Caco-2 (cell line): ENCODE measurements at regions of chr13 and their contacts with region 1.

Region 1: GRCh38 chr13:98484289-98485219 is 92.4 kb downstream of the STK24 start:
- DNase-seq: peak; percentile 88 to 89
- H3K4me3 ChIP-seq: peak overlapping the region; percentile 10; the same call in 1 of the 2 replicates
- H3K4me3 Mint-ChIP-seq: peak overlapping the region; percentile 66
- H3K27ac Mint-ChIP-seq: peak overlapping the region; percentile 94
- H3K4me1 ChIP-seq: peaks cover 35% of the 10 kb centered on the region
- H3K4me1 Mint-ChIP-seq: peaks cover 45% of the 10 kb centered on the region
- H3K27me3 ChIP-seq: no peaks in the 10 kb centered on the region
- H3K27me3 Mint-ChIP-seq: no peaks in the 10 kb centered on the region
- CTCF ChIP-seq: no peak

Region 2: GRCh38 chr13:98041081-98041820 is 443.3 kb before region 1 on chr13:
- CTCF ChIA-PET with region 1: no interaction called
- POLR2A ChIA-PET with region 1: no interaction called
- intact Hi-C with region 1: no loop called
- DNase-seq: no peak
- H3K4me3 ChIP-seq: no peak overlapping the region
- H3K4me3 Mint-ChIP-seq: no peak overlapping the region
- H3K27ac Mint-ChIP-seq: no peak overlapping the region
- H3K4me1 ChIP-seq: no peaks in the 10 kb centered on the region
- H3K4me1 Mint-ChIP-seq: no peaks in the 10 kb centered on the region
- H3K27me3 ChIP-seq: no peaks in the 10 kb centered on the region
- H3K27me3 Mint-ChIP-seq: no peaks in the 10 kb centered on the region
- CTCF ChIP-seq: no peak

Region 3: DNA sequence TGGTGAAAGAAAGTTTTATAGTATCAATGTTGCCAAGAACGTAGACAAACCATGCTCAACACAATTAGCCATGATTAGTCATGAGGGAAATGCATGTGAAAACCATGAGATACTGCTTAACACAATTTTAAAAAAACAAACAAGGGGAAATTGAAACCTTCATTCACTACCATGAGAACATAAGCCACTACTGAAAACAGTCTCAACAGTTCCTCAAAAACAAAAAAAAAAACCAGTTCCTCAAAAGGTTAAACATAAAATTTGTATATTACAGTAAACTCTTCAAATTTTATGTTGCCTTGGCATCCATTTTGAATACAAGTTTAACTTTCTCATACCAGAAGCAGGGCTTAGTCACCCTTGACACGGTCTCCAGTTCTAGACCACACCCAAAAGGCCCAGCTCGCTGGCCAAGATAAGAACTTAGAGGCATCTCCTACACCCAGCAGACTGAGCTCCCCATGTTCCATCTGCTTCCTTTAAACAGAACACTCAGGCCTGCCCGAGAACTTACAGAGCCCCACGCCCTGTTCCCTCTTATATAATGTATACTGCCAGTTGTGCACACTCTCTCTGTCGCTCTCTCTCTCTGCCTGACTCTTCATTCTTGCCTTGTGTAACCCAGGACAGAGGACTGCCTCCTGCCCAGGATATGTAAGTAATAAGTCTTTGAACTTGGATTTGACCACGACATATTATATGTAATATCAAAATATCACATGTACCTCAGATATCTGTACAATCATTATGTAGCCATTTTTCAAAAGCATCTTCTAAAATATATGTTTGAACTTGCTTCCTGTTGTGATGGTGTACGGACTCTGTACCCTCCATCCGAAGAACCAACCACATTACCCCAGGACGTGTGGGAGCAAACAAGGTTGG is 25.0 kb after region 1 on chr13:
- CTCF ChIA-PET with region 1: interaction called, 3 read pairs
- POLR2A ChIA-PET with region 1: interaction called, 10 read pairs
- intact Hi-C with region 1: no loop called
- DNase-seq: peak in 1 of 2 experiments; percentile 56
- H3K4me3 ChIP-seq: no peak overlapping the region
- H3K4me3 Mint-ChIP-seq: no peak overlapping the region
- H3K27ac Mint-ChIP-seq: peak overlapping the region; percentile 41
- H3K4me1 ChIP-seq: peaks cover 34% of the 10 kb centered on the region
- H3K4me1 Mint-ChIP-seq: peaks cover 53% of the 10 kb centered on the region
- H3K27me3 ChIP-seq: no peaks in the 10 kb centered on the region
- H3K27me3 Mint-ChIP-seq: no peaks in the 10 kb centered on the region
- CTCF ChIP-seq: no peak

Region 4: GRCh38 chr13:98542568-98543377 is 58.2 kb after region 1 on chr13:
- CTCF ChIA-PET with region 1: no interaction called
- POLR2A ChIA-PET with region 1: no interaction called
- intact Hi-C with region 1: loop called (anchors 5 kb)
- DNase-seq: no peak
- H3K4me3 ChIP-seq: no peak overlapping the region
- H3K4me3 Mint-ChIP-seq: no peak overlapping the region
- H3K27ac Mint-ChIP-seq: no peak overlapping the region
- H3K4me1 ChIP-seq: peaks cover 11% of the 10 kb centered on the region
- H3K4me1 Mint-ChIP-seq: peaks cover 34% of the 10 kb centered on the region
- H3K27me3 ChIP-seq: no peaks in the 10 kb centered on the region
- H3K27me3 Mint-ChIP-seq: no peaks in the 10 kb centered on the region
- CTCF ChIP-seq: no peak

Region 5: GRCh38 chr13:98556968-98557631 is 72.5 kb after region 1 on chr13:
- CTCF ChIA-PET with region 1: no interaction called
- POLR2A ChIA-PET with region 1: no interaction called
- intact Hi-C with region 1: loop called (anchors 5 kb)
- DNase-seq: peak in 1 of 2 experiments; percentile 39
- H3K4me3 ChIP-seq: no peak overlapping the region
- H3K4me3 Mint-ChIP-seq: no peak overlapping the region
- H3K27ac Mint-ChIP-seq: peak overlapping the region; percentile 31
- H3K4me1 ChIP-seq: 0 out of 2 replicates have a peak, but pooled peaks cover 3% of the 10 kb centered on the region
- H3K4me1 Mint-ChIP-seq: peaks cover 42% of the 10 kb centered on the region
- H3K27me3 ChIP-seq: no peaks in the 10 kb centered on the region
- H3K27me3 Mint-ChIP-seq: no peaks in the 10 kb centered on the region
- CTCF ChIP-seq: peak in 1 of 2 experiments; percentile 22

Region 6: DNA sequence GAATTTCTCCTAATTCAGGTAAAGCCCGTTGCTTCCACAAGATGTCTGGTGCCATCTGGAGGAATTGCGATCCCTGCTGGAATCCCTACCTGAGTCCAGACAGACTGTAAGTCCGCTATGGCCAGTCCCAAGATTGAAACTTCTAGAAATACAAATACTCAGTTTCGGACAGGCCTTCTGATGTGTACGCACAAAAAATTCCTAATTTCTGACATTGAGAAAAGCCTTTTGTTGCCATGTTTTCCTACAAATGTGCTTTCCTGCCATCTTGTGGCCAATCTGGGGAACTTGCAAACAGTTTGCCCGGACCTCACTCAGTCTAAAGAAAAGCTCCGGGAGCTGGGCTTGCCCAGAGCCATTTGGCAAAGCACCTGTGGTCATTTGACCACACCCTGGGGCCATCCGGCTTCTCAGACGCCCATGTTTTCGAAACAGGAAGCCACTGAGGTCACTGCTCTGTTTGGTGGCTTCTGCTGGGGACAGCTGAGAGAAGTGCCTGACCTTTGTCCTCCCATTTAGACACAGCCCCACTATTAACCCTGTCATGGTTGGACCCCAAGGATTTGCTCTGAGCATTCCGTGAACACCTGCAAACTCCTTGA is 188.5 kb after region 1 on chr13:
- CTCF ChIA-PET with region 1: interaction called, 19 read pairs
- POLR2A ChIA-PET with region 1: no interaction called
- intact Hi-C with region 1: loop called (anchors 1 kb)
- DNase-seq: peak; percentile 87 to 91
- H3K4me3 ChIP-seq: no peak overlapping the region
- H3K4me3 Mint-ChIP-seq: peak overlapping the region; percentile 14
- H3K27ac Mint-ChIP-seq: peak overlapping the region; percentile 23
- H3K4me1 ChIP-seq: peaks cover 17% of the 10 kb centered on the region
- H3K4me1 Mint-ChIP-seq: peaks cover 8% of the 10 kb centered on the region
- H3K27me3 ChIP-seq: no peaks in the 10 kb centered on the region
- H3K27me3 Mint-ChIP-seq: no peaks in the 10 kb centered on the region
- CTCF ChIP-seq: peak; percentile 88

Region 7: GRCh38 chr13:98972627-98973026 is 488.1 kb after region 1 on chr13:
- CTCF ChIA-PET with region 1: no interaction called
- POLR2A ChIA-PET with region 1: no interaction called
- intact Hi-C with region 1: no loop called
- DNase-seq: peak; percentile 75 to 82
- H3K4me3 ChIP-seq: no peak overlapping the region
- H3K4me3 Mint-ChIP-seq: peak overlapping the region; percentile 64
- H3K27ac Mint-ChIP-seq: peak overlapping the region; percentile 90
- H3K4me1 ChIP-seq: peaks cover 65% of the 10 kb centered on the region
- H3K4me1 Mint-ChIP-seq: peaks cover 54% of the 10 kb centered on the region
- H3K27me3 ChIP-seq: no peaks in the 10 kb centered on the region
- H3K27me3 Mint-ChIP-seq: no peaks in the 10 kb centered on the region
- CTCF ChIP-seq: no peak